Sciatic nerve (tissue), 2 donors: ENCODE measurements at regions of chr4 and their contacts with region 1.

Region 1: DNA sequence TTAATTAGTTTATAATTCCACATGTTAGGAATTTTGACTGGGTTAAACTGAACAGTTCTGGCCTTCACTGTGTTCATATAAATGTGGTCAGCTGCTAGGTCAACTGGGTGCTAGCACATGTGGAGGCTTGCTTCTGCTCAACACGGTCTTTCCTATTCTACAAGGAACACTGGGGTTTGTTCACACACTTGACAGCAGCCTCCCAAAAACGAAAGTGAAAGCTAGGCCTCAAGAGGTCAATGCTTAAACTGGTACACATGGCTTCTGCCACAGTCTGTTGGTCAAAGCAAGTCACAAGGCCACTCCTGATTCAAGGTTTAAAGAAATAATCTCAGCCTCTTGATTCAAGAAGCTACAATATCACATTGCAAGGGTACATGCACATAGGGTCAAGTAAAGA is 126.5 kb downstream of the QDPR start:
- DNase-seq: no peak
- ATAC-seq: peak; percentile 81

Region 2: DNA sequence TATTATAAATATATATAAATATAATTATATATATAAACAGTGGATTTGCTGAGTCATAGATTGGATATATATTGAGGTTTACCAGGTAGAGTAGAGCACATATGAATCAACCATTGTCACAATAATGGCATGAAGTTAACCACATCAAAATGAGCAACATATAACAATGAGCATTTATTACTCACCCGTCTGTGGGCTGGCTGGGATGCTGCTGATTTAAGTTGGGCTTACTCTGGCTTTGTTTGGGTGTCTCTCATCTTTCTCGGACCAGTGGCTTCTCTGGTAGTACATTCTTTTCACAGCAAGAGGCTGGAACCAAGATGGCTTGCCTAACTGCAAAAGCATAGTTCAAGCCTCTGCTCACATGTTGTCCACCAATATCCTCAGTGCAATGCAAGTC is 1047.5 kb before region 1 on chr4:
- intact Hi-C with region 1: no loop called
- DNase-seq: no peak
- ATAC-seq: no peak

Region 3: GRCh38 chr4:16626945-16627344 is 758.5 kb before region 1 on chr4:
- intact Hi-C with region 1: no loop called
- DNase-seq: no peak
- ATAC-seq: peak; percentile 96

Region 4: DNA sequence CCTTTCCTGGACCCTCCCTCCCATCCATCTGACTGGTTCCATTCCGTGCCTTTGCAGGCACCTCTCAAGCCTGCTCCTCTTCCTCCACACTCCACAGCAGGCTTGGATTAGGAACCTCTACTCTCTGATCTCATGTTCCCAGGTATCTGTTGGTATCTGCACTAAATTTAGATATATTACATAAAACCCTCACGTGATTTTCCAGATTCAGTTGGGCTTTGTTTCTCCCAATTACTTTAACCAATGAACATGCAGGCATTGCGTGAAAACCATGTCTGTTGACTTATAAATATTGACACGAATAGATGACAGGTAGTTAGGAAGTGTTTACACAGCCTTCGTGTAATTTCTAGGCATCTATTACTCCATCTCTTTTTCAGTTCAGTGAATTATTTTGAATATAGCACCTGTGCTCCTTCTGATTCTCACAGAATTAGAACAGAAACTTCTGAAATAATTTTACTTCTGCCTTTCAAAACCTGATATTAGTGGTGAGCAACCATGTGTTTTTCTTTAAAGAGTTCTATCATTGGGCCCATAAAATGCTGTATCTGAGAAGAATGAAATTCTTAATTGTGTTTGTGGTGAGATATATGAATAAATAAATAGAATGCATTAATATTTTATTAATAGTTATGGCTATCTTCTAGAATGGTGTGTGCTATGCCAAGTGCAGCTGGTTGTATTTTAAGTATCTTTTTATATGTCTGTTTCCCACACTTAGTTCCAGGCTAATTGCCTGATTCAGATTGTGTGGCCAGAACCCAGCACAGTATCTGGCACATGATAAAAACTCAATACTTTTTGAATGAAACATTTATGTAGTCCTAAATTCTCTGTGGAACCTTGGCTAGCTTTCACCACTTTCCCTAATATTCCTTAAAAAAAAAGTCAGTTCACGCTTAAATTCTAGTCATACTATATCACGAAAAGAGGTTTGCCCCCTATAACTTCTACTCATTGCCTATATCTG is 178.3 kb before region 1 on chr4:
- intact Hi-C with region 1: no loop called
- DNase-seq: no peak
- ATAC-seq: no peak

Region 5: GRCh38 chr4:18669390-18669789 is 1284.0 kb after region 1 on chr4:
- intact Hi-C with region 1: loop called (anchors 5 kb)
- DNase-seq: no peak
- ATAC-seq: no peak